Spleen (tissue), 13 donors: ENCODE measurements at regions of chr12 and their contacts with region 1.

Region 1: DNA sequence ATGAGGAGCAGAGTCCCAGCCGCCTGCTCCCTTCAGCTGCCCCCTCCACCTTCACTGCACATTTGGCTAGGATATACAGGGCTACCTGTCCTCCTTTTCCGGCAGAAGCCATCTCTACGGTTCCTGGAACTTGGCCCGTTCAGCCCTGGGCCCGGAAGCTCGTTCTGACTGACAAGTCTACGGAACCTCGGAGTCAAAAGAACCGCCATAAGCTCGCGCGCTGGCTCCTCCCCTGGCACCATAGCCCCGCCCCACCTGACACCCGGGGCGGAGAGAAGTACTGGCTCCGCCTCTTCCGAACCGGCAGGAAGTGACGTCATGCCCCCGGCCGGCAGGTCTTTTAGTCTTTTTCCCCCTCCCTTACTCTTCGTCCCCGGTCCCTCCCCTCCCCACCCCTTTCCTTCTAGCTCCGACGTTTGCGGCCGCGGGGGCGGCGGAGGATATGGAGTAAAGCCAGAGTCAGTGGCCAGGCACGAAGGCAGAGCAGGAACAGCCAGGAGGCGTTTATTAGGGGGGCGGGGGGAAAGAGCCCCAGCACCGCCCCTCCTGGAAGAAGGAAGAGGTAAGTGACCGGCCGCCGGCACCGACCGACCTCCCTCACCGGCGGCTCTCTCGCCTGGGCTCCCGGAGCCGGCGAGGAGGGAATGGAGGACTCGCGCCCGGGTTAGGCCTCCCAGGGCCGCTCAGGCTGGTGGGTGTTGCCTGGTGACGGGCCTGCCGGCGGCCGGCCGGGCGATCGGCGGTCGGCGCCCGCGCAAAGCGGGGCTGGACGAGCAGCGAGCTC is at the starts of genes DEPDC4 and SCYL2:
- DNase-seq: peak; percentile 98
- H3K4me3 ChIP-seq: peak within 1 kb of the TSS; percentile 56 to 85 (median 78)
- H3K27ac ChIP-seq: peak within 1 kb of the TSS; percentile 85 to 100 (median 97)
- H3K4me1 ChIP-seq: peaks cover 16 to 51% (median 39%) of the 10 kb centered on the region in 6 donors
- H3K27me3 ChIP-seq: no peaks in the 10 kb centered on the region
- CTCF ChIP-seq: peak in 4 of 11 experiments; percentile 13 to 42 (median 38)
- POLR2A ChIP-seq: peak in 2 of 3 donors; percentile 17 to 69
- total RNA-seq, gene DEPDC4: 0.26 to 1.4 (median 0.73) TPM in 5 of 7 donors, not detected in the others
- total RNA-seq, gene SCYL2: 35.8 to 72.4 (median 48.7) TPM

Region 2: GRCh38 chr12:100208834-100209233 is 58.2 kb before region 1 on chr12:
- intact Hi-C with region 1: loop called (anchors 5 kb)
- DNase-seq: peak; percentile 36
- H3K4me3 ChIP-seq: no peak overlapping the region
- H3K27ac ChIP-seq: no peak overlapping the region
- H3K4me1 ChIP-seq: peaks cover 0 to 5% (median 0%) of the 10 kb centered on the region in 6 donors
- H3K27me3 ChIP-seq: no peaks in the 10 kb centered on the region
- CTCF ChIP-seq: no peak
- POLR2A ChIP-seq: no peak

Region 3: GRCh38 chr12:100375038-100375735 is 108.2 kb after region 1 on chr12:
- intact Hi-C with region 1: no loop called
- DNase-seq: no peak
- H3K4me3 ChIP-seq: peak overlapping the region in 1 of 8 donors; percentile 15
- H3K27ac ChIP-seq: no peak overlapping the region
- H3K4me1 ChIP-seq: no peaks in the 10 kb centered on the region
- H3K27me3 ChIP-seq: peaks cover 0 to 10% (median 0%) of the 10 kb centered on the region in 7 donors
- CTCF ChIP-seq: no peak
- POLR2A ChIP-seq: no peak

Region 4: DNA sequence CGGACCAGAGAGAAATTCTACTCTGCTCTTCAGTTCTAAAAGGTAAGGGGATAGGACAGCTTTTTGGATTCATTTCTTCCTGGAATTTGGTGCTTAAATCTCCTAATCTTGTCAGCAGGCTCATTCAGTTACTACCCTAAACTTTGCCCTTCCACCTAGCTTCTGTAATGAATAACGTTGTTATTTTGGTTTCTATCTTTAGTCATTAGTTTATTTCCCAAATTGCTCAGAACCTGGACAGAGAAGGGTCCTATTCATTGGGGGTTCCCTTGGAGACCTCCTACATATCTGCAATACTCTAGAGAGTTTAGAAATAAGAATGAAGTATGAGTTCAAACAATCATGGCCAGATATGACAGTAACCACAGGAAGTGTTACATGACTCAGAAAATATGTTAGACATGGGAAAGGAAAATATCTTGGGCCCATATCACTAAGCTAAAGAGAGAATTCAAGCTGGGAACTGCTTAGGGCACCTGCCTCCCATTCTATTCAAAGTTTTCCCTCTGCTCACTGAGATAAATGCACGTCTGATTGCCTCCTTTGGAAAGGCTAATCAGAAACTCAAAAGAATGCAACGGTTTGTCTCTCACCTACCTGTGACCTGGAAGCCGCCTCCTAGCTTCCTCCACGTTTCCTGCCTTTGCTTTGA is 394.4 kb after region 1 on chr12:
- intact Hi-C with region 1: no loop called
- DNase-seq: no peak
- H3K4me3 ChIP-seq: no peak overlapping the region
- H3K27ac ChIP-seq: no peak overlapping the region
- H3K4me1 ChIP-seq: no peaks in the 10 kb centered on the region
- H3K27me3 ChIP-seq: no peaks in the 10 kb centered on the region
- CTCF ChIP-seq: no peak
- POLR2A ChIP-seq: no peak